Common myeloid progenitor, CD34-positive (primary cell): ENCODE measurements at regions of chr6 and their contacts with region 1.

Region 1: GRCh38 chr6:33147807-33148666 is 44.2 kb downstream of the COL11A2 start:
- DNase-seq: peak; percentile 38 to 52 (median 40)
- H3K4me3 ChIP-seq: no peak overlapping the region
- H3K27ac ChIP-seq: no peak overlapping the region
- H3K4me1 ChIP-seq: peaks cover 0 to 13% (median 10%) of the 10 kb centered on the region in 4 experiments
- H3K27me3 ChIP-seq: no peaks in the 10 kb centered on the region

Region 2: GRCh38 chr6:33000055-33000454 is 148.0 kb before region 1 on chr6:
- CTCF ChIA-PET with region 1: interaction called, 14 read pairs
- POLR2A ChIA-PET with region 1: no interaction called
- DNase-seq: peak; percentile 68 to 86 (median 77)
- H3K4me3 ChIP-seq: no peak overlapping the region
- H3K27ac ChIP-seq: no peak overlapping the region
- H3K4me1 ChIP-seq: peaks cover 5 to 8% (median 6%) of the 10 kb centered on the region in 4 experiments
- H3K27me3 ChIP-seq: peaks cover 0 to 3% (median 0%) of the 10 kb centered on the region in 5 experiments

Region 3: GRCh38 chr6:33014841-33015634 is 133.0 kb before region 1 on chr6:
- CTCF ChIA-PET with region 1: interaction called, 13 read pairs
- POLR2A ChIA-PET with region 1: no interaction called
- DNase-seq: peak; percentile 89 to 95 (median 92)
- H3K4me3 ChIP-seq: peak overlapping the region in 1 of 7 experiments; percentile 26
- H3K27ac ChIP-seq: no peak overlapping the region
- H3K4me1 ChIP-seq: peaks cover 19 to 30% (median 28%) of the 10 kb centered on the region in 4 experiments
- H3K27me3 ChIP-seq: no peaks in the 10 kb centered on the region

Region 4: DNA sequence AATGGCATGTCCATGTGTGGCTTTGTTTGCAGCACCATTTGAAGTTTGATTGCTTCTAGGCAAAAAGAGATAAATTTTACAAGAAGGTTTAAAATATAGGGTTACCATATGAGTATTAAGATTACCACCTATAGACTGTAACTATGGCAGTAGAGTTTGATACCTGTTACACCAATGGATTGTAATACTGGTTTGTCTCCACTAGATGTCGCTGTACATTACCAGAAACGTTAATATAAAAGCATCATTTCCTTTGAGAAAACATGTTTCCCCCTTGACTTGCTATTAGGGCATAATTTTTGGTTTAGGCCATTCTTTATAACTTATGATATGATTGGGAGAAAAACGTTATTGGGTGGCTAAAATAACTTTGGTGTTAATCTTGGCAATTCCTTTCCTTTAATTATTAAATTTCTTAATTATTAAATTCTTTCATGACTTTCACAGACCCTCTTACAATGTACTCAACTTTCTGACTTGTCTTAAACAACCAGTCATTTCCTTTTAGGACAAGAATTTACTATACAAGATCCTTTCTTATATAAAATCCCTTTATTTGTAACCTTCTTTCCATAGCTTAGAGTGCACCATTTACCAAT is 29.4 kb before region 1 on chr6:
- CTCF ChIA-PET with region 1: interaction called, 238 read pairs
- POLR2A ChIA-PET with region 1: no interaction called
- DNase-seq: peak; percentile 65 to 79 (median 79)
- H3K4me3 ChIP-seq: no peak overlapping the region
- H3K27ac ChIP-seq: no peak overlapping the region
- H3K4me1 ChIP-seq: peaks cover 13 to 33% (median 18%) of the 10 kb centered on the region in 4 experiments
- H3K27me3 ChIP-seq: peaks cover 3 to 20% (median 16%) of the 10 kb centered on the region in 5 experiments

Region 5: DNA sequence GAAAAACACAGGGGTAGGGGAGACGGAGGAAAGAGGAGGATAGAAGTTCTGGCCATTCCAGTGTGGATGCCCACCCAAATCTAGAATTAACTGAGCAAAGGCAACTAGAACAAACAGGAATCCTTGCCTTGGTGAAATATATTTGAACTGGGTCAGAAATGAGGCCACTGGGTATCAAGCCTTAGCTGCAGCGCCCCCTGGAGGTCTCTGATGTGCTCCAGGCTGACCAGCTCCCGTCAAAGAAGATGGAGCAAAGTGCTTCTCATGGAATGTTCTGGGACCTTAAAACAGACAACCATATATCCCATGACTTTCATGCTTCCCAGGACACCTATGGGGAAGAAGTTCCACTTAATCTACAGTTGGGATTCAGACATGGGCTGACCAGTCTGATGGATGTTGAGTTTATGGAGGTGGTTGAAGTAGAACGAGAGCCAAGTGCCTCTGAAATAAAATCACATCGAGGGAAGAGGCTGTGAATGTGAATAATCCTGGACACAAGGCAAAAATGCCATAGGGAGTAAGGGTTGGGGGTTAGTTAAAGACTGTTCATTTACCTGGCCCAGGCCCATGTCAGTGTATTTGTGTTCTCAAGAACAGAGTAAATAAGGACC is 21.8 kb before region 1 on chr6:
- CTCF ChIA-PET with region 1: interaction called, 238 read pairs
- POLR2A ChIA-PET with region 1: no interaction called
- DNase-seq: peak; percentile 51 to 78 (median 66)
- H3K4me3 ChIP-seq: no peak overlapping the region
- H3K27ac ChIP-seq: no peak overlapping the region
- H3K4me1 ChIP-seq: no peaks in the 10 kb centered on the region
- H3K27me3 ChIP-seq: no peaks in the 10 kb centered on the region

Region 6: DNA sequence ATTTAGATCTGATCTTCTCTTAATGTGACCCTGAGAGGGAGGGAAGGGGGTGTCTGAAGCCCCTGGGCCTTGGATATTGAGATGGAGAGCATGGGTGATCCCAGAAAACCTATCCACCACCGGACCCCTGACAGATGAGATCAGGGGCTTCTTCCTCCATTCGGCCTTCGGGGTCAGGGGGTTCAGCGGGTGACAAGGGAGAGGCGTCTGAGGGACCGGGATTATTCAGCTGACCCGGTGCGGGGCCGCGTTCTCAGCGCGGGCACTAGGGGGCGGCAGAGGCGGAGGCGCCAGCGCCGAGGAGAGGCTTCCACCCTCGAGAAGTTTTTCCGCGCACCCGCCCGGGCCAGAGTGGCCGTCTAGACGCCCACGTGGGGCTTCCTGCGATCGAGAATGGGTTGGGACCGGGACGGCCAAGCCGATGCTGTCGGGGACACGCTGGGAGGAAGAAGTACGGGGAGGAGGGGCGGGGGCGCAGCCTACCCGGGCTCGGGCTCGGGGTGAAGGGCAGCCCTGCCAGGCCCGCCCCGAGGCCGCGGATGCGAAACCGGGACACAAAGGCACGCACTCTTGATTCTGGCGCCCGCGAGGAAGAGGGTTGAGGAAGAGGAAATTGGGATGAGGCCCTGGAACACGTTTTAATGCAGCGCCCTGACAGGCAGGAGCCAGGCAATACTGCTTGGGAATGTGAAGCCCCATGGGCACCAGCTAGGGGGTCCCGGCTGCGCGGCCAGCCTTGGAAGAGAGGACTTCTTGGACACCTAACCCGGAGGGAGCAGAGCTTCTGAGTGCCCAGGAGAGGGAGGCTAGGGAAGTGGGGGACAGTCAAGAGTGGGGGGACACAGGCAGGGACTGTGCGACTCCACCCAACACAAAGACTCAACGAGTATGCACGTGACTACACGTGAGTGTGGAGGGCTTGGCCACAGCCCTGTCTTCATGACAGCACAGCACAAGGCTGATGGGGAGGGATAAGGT is 13.6 kb after region 1 on chr6:
- CTCF ChIA-PET with region 1: interaction called, 21 read pairs
- POLR2A ChIA-PET with region 1: interaction called, 3 read pairs
- DNase-seq: peak; percentile 61 to 74 (median 73)
- H3K4me3 ChIP-seq: peak overlapping the region; percentile 19 to 78 (median 57)
- H3K27ac ChIP-seq: no peak overlapping the region
- H3K4me1 ChIP-seq: peaks cover 0 to 20% (median 14%) of the 10 kb centered on the region in 4 experiments
- H3K27me3 ChIP-seq: peaks cover 0 to 5% (median 0%) of the 10 kb centered on the region in 5 experiments

Region 7: GRCh38 chr6:33172688-33173534 is 24.9 kb after region 1 on chr6:
- CTCF ChIA-PET with region 1: interaction called, 12 read pairs
- POLR2A ChIA-PET with region 1: no interaction called
- DNase-seq: peak; percentile 29 to 44 (median 31)
- H3K4me3 ChIP-seq: no peak overlapping the region
- H3K27ac ChIP-seq: no peak overlapping the region
- H3K4me1 ChIP-seq: no peaks in the 10 kb centered on the region
- H3K27me3 ChIP-seq: peaks cover 0 to 2% (median 0%) of the 10 kb centered on the region in 5 experiments

Region 8: GRCh38 chr6:33191383-33192104 is 43.5 kb after region 1 on chr6:
- CTCF ChIA-PET with region 1: no interaction called
- POLR2A ChIA-PET with region 1: no interaction called
- DNase-seq: no peak
- H3K4me3 ChIP-seq: peak overlapping the region in 3 of 7 experiments; percentile 15 to 53 (median 40)
- H3K27ac ChIP-seq: no peak overlapping the region
- H3K4me1 ChIP-seq: peaks cover 0 to 20% (median 13%) of the 10 kb centered on the region in 4 experiments
- H3K27me3 ChIP-seq: peaks cover 7 to 31% (median 13%) of the 10 kb centered on the region in 5 experiments